Lower leg skin (tissue), 4 donors: ENCODE measurements at regions of chr17 and their contacts with region 1.

Region 1: GRCh38 chr17:34637548-34638525 is 58.5 kb downstream of the TMEM132E start:
- DNase-seq: peak; percentile 60 to 93
- H3K4me3 ChIP-seq: no peak overlapping the region
- CTCF ChIP-seq: no peak
- POLR2A ChIP-seq: no peak

Region 2: DNA sequence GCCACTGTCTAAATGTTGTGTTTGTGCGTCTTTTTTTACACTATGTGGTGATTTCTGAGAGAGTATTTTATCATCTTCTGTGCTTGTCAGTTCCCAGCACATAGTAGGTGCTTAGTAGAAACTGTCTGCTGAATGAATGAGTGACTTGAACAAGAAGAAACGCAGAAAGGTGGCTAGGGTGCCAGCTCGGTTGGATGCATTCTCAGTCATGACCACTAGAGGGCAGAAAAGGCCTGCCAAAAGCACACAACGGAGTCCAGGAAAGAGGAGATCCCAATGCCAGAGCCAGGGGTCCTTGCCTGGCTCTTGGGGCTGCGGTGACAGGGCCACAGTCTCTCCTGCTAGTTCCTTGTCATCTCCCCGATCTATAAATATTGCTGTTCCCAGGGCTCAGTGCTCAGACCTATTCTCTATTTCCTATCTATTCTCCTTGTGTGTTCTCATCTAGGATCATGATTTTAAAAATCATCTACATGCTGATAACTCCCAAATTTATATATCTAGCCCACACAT is 217.5 kb before region 1 on chr17:
- intact Hi-C with region 1: loop called (anchors 5 kb)
- DNase-seq: peak; percentile 65 to 89
- H3K4me3 ChIP-seq: no peak overlapping the region
- CTCF ChIP-seq: peak in 1 of 3 donors; percentile 26
- POLR2A ChIP-seq: no peak

Region 3: DNA sequence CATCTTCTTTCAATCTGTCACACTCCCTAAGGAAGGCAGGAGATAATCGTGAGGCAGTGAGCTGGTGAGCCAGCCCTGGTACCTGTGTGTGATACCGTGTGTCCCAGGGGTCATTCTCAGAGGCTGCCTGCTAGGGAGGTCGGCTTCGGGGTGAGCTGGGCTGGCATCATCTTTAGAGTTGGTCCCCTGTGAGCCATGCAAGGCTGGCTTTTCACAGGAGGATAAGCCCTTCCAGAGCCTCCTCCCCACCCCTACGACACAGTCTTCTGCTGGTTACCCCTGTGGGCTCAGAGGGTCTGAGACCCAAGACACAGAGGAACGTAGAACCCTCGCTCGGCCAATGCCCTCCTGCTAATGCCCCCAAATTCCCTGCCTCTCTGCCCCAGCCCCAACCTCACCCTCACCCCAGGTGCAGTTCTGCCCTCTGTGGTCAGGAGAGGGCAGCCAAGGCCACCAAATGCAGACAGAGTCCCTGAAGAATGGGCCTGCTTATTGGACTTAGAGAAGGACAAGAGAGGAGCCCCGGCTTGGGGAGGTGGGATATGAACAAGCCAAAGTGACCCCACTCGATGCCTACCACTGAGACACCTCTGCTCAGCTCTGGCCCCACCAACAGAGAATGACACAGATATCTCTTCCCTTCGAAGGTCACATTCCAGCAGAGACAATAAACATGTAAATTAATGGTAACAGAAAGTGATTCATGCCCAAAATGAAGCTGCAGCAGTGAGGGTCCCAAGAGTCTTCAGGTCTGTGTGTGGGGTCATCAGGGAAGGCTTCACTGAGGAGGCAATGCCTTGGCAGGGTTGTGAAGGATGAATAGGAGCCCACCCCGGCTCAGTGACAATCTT is 194.0 kb before region 1 on chr17:
- intact Hi-C with region 1: no loop called
- DNase-seq: no peak
- H3K4me3 ChIP-seq: no peak overlapping the region
- CTCF ChIP-seq: no peak
- POLR2A ChIP-seq: no peak

Region 4: GRCh38 chr17:34533811-34534527 is 103.9 kb before region 1 on chr17:
- intact Hi-C with region 1: loop called (anchors 5 kb)
- DNase-seq: no peak
- H3K4me3 ChIP-seq: no peak overlapping the region
- CTCF ChIP-seq: no peak
- POLR2A ChIP-seq: no peak